MCF 10A (cell line): ENCODE measurements at regions of chr1 and their contacts with region 1.

Region 1: GRCh38 chr1:6401673-6402072 is 8.1 kb upstream of the ACOT7 start:
- DNase-seq: no peak
- H3K4me3 Mint-ChIP-seq: no peak overlapping the region
- H3K27ac Mint-ChIP-seq: no peak overlapping the region
- H3K4me1 Mint-ChIP-seq: no peaks in the 10 kb centered on the region
- H3K27me3 Mint-ChIP-seq: no peaks in the 10 kb centered on the region
- CTCF ChIP-seq: no peak

Region 2: GRCh38 chr1:6343506-6344405 is 57.9 kb before region 1 on chr1:
- CTCF ChIA-PET with region 1: interaction called, 24 read pairs
- POLR2A ChIA-PET with region 1: no interaction called
- intact Hi-C with region 1: no loop called
- DNase-seq: peak; percentile 98
- H3K4me3 Mint-ChIP-seq: no peak overlapping the region
- H3K27ac Mint-ChIP-seq: peak overlapping the region; percentile 68
- H3K4me1 Mint-ChIP-seq: peaks cover 15% of the 10 kb centered on the region
- H3K27me3 Mint-ChIP-seq: no peaks in the 10 kb centered on the region
- CTCF ChIP-seq: peak; percentile 93

Region 3: GRCh38 chr1:6385488-6386191 is 16.0 kb before region 1 on chr1:
- CTCF ChIA-PET with region 1: interaction called, 15 read pairs
- POLR2A ChIA-PET with region 1: interaction called, 36 read pairs
- intact Hi-C with region 1: no loop called
- DNase-seq: peak; percentile 97
- H3K4me3 Mint-ChIP-seq: peak overlapping the region; percentile 89
- H3K27ac Mint-ChIP-seq: peak overlapping the region; percentile 81
- H3K4me1 Mint-ChIP-seq: peaks cover 25% of the 10 kb centered on the region
- H3K27me3 Mint-ChIP-seq: no peaks in the 10 kb centered on the region
- CTCF ChIP-seq: no peak

Region 4: DNA sequence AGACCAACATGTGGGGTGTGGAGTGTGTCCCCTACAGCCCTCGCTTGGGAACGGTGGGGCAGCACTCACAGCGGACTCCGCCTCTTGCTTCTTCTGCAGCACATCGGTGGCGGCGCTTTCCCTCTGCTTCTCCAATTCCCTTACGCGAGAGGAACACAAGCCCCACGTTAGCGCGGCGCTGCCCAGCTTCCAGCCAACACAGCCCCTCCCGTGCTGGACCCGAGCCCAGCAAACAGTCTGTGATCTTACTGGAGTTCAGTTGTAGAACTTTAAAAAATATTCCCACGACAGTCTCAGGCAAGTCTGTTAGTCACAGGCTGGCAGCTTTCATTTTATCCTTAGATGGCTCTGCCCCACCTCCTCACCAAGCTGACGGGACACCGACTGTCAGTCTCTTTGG is 236.6 kb after region 1 on chr1:
- CTCF ChIA-PET with region 1: no interaction called
- POLR2A ChIA-PET with region 1: no interaction called
- intact Hi-C with region 1: no loop called
- DNase-seq: no peak
- H3K4me3 Mint-ChIP-seq: no peak overlapping the region
- H3K27ac Mint-ChIP-seq: no peak overlapping the region
- H3K4me1 Mint-ChIP-seq: no peaks in the 10 kb centered on the region
- H3K27me3 Mint-ChIP-seq: no peaks in the 10 kb centered on the region
- CTCF ChIP-seq: no peak

Region 5: DNA sequence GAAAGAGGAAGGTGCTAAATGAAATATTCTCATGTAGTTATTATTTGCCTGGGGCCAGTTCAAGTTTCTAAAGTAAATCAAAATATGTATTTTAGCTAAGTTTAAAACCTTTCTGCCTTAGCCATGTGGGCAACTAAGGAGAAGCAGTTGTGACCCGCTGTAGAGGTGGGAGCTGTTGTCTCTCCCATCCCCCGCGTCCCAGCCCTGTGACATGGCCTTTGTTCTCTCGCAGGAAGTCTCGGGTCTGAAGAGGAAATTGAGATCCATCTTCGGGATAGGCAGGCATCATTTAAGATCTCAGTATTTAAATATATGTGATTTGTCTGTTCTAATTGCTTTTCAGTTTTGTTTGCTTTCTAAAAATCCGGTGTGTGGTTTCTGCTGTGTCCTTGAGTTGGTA is 505.1 kb after region 1 on chr1:
- CTCF ChIA-PET with region 1: no interaction called
- POLR2A ChIA-PET with region 1: no interaction called
- intact Hi-C with region 1: no loop called
- DNase-seq: no peak
- H3K4me3 Mint-ChIP-seq: no peak overlapping the region
- H3K27ac Mint-ChIP-seq: no peak overlapping the region
- H3K4me1 Mint-ChIP-seq: no peaks in the 10 kb centered on the region
- H3K27me3 Mint-ChIP-seq: peaks cover 11% of the 10 kb centered on the region
- CTCF ChIP-seq: no peak